SK-N-SH (cell line): ENCODE measurements at regions of chr12 and their contacts with region 1.

Region 1: DNA sequence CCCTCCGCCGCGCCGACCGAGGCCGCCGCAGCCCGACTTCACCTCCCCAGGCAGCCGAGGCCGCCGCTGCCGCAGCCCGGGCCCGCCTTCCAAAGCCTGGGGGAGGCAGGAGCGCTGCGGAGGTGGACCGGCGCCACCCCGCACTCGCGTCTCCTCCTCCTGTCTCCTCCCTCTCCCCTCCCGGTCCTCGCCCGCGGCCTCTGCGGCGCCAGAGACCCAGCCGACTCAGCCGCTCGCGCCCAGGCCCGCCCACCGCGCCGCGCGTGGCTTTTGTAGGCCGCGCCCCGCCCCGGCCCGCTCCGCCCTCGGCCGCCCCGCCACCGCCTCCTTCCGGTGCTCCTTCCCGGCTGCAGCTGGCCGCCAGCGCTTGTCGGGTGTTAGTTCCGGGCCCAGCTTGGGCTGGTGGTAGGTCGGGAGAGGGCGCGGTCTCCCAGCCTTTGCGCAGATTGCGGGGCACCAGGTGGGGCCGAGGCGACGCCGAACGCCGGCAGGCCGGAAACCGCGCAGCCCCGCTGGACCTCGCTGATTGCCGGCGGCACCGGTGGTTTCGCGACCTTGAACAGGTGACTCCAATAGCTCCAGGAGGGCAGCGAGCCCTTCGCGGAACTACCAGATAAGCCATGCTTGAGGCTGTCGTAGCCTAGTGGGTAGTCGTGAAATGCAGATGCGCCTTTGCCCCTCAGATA is at the start of gene CAPRIN2:
- DNase-seq: peak; percentile 95
- H3K4me3 ChIP-seq: peak within 1 kb of the TSS; percentile 74 to 93
- H3K27ac ChIP-seq: peak within 1 kb of the TSS; percentile 49 to 94
- H3K4me1 ChIP-seq: peaks cover 3 to 14% of the 10 kb centered on the region in 2 experiments; a peak in 2 of 4 replicates
- H3K27me3 ChIP-seq: no peaks in the 10 kb centered on the region
- CTCF ChIP-seq: peak; percentile 41
- EP300 ChIP-seq: no peak
- RAD21 ChIP-seq: peak; percentile 47
- polyA plus RNA-seq, gene CAPRIN2: 21.4 and 29.1 TPM in 2 replicates

Region 2: DNA sequence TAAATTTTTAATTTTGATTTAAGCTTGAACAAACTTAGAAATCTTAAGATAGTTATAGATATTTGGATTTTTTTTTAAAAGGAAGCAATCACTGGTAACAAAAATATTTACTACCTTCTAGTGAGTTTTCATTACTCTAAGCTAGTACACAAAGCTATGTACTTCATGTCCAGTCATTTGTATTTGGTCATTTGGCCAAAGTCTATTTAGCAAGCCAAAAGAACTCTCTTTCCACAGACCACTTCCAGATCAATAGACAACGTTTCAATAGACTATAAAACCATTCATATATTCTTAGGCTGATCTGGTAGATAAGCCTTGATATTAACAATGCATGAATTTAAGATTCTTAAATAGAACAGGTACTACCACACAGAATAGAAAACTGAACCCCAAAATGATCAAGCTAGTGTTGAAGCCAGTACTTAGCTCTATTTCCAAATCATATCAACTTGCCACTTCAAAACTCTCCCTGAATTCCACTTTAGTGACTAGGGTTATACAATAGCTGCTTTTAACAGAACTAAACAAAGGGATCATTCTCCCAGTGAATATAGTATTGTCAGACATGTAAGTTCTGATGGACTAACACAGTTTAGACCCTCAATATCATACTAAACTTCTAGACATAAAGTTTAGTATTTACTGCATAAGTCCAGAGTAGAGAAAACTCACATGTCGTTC is 21.8 kb before region 1 on chr12:
- CTCF ChIA-PET with region 1: interaction called, 11 read pairs
- POLR2A ChIA-PET with region 1: interaction called, 7 read pairs
- DNase-seq: no peak
- H3K4me3 ChIP-seq: no peak overlapping the region
- H3K27ac ChIP-seq: no peak overlapping the region
- H3K4me1 ChIP-seq: 0 out of 4 replicates have a peak, but pooled peaks cover 0 to 6% of the 10 kb centered on the region in 2 experiments
- H3K27me3 ChIP-seq: no peaks in the 10 kb centered on the region
- CTCF ChIP-seq: no peak
- EP300 ChIP-seq: no peak
- RAD21 ChIP-seq: no peak

Region 3: DNA sequence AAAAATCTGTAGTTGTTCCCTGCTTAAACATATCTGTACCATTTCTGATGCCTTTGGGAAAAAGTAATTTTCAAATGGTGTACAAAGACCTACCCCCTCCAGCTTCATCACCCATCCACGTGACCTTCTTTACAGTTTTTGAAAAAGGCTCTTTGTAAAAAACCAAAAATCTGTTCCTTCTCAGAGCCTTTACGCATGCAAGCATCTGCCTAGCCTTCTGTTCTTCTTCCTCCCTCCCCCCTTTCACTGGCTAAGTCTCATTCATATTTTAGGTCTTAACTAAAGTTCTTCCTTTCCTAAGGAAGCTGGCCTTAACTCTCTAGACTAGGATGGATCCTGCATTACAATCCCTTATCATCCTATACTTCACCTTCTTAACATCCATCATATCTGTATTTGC is 10.5 kb before region 1 on chr12:
- CTCF ChIA-PET with region 1: interaction called, 14 read pairs
- POLR2A ChIA-PET with region 1: no interaction called
- DNase-seq: no peak
- H3K4me3 ChIP-seq: no peak overlapping the region
- H3K27ac ChIP-seq: no peak overlapping the region
- H3K4me1 ChIP-seq: no peaks in the 10 kb centered on the region
- H3K27me3 ChIP-seq: no peaks in the 10 kb centered on the region
- CTCF ChIP-seq: no peak
- EP300 ChIP-seq: no peak
- RAD21 ChIP-seq: no peak

Region 4: DNA sequence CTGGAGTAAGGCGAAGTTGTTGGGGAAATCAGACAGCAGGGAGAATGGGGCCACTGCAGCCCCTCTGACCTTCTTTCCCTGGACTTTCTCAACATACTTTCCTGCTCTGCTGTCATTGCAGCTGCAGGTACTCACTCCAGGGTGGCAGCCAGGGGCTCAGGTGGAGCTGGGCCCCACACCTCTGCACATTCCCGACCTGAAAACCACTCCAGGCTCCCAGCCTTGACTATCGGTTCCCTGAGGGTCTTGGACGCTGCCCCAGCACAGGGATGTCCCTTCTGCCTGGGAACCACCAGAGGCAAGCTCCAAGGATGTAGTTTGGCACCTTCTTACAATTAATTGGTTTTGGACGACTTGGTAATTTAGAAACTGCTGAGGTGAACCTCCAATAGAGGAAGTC is 24.7 kb after region 1 on chr12:
- CTCF ChIA-PET with region 1: no interaction called
- POLR2A ChIA-PET with region 1: no interaction called
- DNase-seq: no peak
- H3K4me3 ChIP-seq: no peak overlapping the region
- H3K27ac ChIP-seq: no peak overlapping the region
- H3K4me1 ChIP-seq: no peaks in the 10 kb centered on the region
- H3K27me3 ChIP-seq: no peaks in the 10 kb centered on the region
- CTCF ChIP-seq: no peak
- EP300 ChIP-seq: no peak
- RAD21 ChIP-seq: no peak

Region 5: DNA sequence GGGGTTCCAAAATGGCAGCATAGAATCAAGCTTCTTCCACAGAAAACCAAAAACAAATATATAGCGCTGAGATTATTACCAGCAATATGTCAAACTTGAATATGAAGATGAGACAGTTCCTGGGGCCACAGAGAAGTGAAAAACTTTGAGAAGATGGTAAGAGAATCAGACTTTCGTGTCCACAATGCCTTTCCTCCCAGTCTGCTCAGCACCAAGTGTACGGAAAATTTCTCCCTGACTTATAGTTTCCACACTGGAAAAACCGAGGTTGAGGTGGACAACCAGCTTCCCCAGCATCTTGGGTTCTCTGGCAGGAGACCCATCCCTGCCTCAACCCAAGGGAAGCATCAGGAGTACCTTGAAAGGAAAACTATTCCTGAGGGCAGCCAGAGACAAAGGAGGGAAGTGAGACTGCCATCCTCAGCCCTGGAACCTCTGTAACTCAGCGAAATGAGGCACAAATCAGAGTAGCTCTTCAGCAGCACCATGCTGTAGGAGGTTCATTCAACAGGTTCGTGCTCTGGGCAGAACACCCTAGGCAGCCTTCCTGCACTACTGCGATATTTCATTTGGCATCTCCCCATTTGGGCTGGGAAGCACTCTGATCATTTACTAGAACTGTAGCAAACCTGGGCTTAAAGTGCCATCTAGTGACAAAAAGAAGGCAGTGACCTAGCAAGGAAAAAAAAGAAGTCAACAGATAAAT is 52.3 kb after region 1 on chr12:
- CTCF ChIA-PET with region 1: interaction called, 23 read pairs
- POLR2A ChIA-PET with region 1: no interaction called
- DNase-seq: peak; percentile 61
- H3K4me3 ChIP-seq: peak overlapping the region in 1 of 2 experiments; percentile 10; a peak in 1 of 4 replicates
- H3K27ac ChIP-seq: no peak overlapping the region
- H3K4me1 ChIP-seq: peaks cover 0 to 2% of the 10 kb centered on the region in 2 experiments; a peak in 1 of 4 replicates
- H3K27me3 ChIP-seq: no peaks in the 10 kb centered on the region
- CTCF ChIP-seq: peak; percentile 90
- EP300 ChIP-seq: no peak
- RAD21 ChIP-seq: peak; percentile 95

Region 6: DNA sequence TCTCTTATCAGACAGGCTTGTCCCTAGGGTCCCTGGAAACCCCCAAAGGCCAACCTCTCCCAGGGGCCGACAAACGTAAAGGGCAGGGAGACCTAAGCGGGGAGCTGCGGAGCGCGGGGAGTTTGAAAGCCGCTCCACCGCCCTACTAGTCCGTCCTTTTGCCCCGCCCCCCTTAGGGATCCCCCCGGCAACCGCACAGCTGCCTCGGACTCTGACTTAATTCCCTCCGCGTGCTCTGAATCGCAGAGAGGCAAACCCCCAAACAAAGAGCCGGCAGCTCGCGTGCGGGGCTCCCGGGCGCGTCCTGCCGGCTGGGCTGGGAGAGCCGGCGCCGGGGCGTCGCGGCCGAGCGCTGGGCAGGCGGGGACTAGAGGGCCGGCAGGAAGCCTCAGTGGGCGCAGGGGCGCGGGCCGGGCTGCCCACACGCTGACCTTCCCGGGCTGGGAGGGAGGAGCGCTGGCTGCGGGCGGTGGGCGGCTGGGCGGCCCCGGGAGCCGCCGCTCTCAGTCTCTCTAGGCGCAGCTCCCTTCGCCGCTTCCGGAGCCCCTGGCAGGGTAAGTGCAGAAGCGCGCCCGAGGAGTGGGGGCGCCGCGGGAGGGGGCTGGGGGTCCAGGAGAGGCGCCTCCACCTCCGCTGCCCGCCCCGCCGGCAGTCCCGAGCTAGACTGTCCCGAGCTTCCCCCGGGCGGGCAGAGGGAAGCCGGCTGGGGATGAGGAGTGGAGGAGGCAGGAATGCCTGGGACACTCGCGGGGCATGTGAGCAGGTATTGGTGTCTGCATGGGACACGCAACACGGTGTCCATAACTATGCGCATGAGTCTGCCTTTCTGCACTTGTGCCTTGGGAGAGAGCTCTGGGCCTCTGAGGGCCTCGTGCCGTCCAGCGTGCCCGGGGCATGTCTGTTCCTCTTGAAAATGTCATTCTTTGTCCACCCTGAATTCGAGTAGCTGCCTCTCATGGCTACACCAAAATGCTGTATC is 171.7 kb after region 1 on chr12 and contains the start of gene TSPAN11:
- CTCF ChIA-PET with region 1: no interaction called
- POLR2A ChIA-PET with region 1: no interaction called
- DNase-seq: peak; percentile 89
- H3K4me3 ChIP-seq: peak within 1 kb of the TSS; percentile 55 to 60
- H3K27ac ChIP-seq: peak within 1 kb of the TSS in 1 of 2 experiments; percentile 86; a peak in 2 of 4 replicates
- H3K4me1 ChIP-seq: peaks cover 9 to 53% of the 10 kb centered on the region in 2 experiments; a peak in 3 of 4 replicates
- H3K27me3 ChIP-seq: no peaks in the 10 kb centered on the region
- CTCF ChIP-seq: no peak
- EP300 ChIP-seq: no peak
- RAD21 ChIP-seq: no peak
- polyA plus RNA-seq, gene TSPAN11: 6.4 and 6.6 TPM in 2 replicates